CD4-positive, alpha-beta T cell (primary cell): ENCODE measurements at regions of chr13 and their contacts with region 1.

Region 1: DNA sequence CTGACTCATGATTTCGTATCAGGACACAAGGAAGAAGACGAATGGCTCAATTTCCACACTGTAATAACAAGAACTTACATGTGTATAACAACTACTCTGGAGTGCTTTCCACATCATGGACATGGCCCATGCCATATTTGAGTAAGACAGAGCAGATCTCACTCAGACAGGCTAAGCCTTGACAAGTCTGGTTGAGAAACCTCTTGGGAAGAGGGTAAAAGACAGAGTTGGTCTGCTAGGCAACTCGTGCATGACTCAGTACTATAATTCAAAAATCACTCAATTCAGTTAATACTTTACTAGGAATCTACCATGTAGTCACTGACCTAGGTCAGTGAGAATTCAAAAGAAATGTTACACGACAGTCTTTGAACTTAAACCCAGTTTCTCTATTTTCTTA is 5.7 kb upstream of the THSD1 start:
- DNase-seq: no peak
- ATAC-seq: no peak
- H3K4me3 ChIP-seq: no peak overlapping the region
- H3K4me3 Mint-ChIP-seq: no peak overlapping the region
- H3K27ac ChIP-seq: no peak overlapping the region
- H3K27ac Mint-ChIP-seq: no peak overlapping the region
- H3K4me1 ChIP-seq: no peaks in the 10 kb centered on the region
- H3K4me1 Mint-ChIP-seq: peaks cover 1% of the 10 kb centered on the region
- H3K27me3 ChIP-seq: no peaks in the 10 kb centered on the region
- H3K27me3 Mint-ChIP-seq: no peaks in the 10 kb centered on the region
- CTCF ChIP-seq: no peak

Region 2: DNA sequence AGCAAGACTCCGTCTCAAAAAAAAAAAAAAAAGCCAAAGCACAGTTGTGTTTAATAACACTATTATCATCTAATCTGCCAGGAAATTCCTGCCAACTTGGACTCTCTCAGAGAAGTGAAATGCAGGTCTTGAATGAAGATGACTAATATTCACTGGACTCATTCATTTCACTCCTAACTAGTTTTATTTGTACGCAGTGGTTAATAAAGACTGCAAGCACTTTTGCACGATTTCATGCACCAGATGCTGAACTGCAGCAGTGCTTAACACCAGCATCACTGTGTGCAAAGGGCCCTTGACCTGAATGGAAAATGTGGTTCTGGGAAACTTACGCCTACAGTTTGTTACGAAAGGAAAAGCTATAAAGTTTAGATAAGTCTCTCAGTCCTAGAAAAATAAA is 670.9 kb before region 1 on chr13:
- CTCF ChIA-PET with region 1: no interaction called
- POLR2A ChIA-PET with region 1: no interaction called
- intact Hi-C with region 1: loop called in 1 of 2 experiments (anchors 10 kb)
- DNase-seq: no peak
- ATAC-seq: no peak
- H3K4me3 ChIP-seq: no peak overlapping the region
- H3K4me3 Mint-ChIP-seq: no peak overlapping the region
- H3K27ac ChIP-seq: no peak overlapping the region
- H3K27ac Mint-ChIP-seq: no peak overlapping the region
- H3K4me1 ChIP-seq: peaks cover 2% of the 10 kb centered on the region
- H3K4me1 Mint-ChIP-seq: peaks cover 5% of the 10 kb centered on the region
- H3K27me3 ChIP-seq: no peaks in the 10 kb centered on the region
- H3K27me3 Mint-ChIP-seq: no peaks in the 10 kb centered on the region
- CTCF ChIP-seq: no peak

Region 3: GRCh38 chr13:52432456-52432855 is 20.8 kb after region 1 on chr13:
- CTCF ChIA-PET with region 1: no interaction called
- POLR2A ChIA-PET with region 1: no interaction called
- intact Hi-C with region 1: no loop called
- DNase-seq: no peak
- ATAC-seq: no peak
- H3K4me3 ChIP-seq: no peak overlapping the region
- H3K4me3 Mint-ChIP-seq: no peak overlapping the region
- H3K27ac ChIP-seq: no peak overlapping the region
- H3K27ac Mint-ChIP-seq: no peak overlapping the region
- H3K4me1 ChIP-seq: no peaks in the 10 kb centered on the region
- H3K4me1 Mint-ChIP-seq: no peaks in the 10 kb centered on the region
- H3K27me3 ChIP-seq: no peaks in the 10 kb centered on the region
- H3K27me3 Mint-ChIP-seq: no peaks in the 10 kb centered on the region
- CTCF ChIP-seq: no peak